Panc1 (cell line): ENCODE measurements at regions of chr11 and their contacts with region 1.

Region 1: DNA sequence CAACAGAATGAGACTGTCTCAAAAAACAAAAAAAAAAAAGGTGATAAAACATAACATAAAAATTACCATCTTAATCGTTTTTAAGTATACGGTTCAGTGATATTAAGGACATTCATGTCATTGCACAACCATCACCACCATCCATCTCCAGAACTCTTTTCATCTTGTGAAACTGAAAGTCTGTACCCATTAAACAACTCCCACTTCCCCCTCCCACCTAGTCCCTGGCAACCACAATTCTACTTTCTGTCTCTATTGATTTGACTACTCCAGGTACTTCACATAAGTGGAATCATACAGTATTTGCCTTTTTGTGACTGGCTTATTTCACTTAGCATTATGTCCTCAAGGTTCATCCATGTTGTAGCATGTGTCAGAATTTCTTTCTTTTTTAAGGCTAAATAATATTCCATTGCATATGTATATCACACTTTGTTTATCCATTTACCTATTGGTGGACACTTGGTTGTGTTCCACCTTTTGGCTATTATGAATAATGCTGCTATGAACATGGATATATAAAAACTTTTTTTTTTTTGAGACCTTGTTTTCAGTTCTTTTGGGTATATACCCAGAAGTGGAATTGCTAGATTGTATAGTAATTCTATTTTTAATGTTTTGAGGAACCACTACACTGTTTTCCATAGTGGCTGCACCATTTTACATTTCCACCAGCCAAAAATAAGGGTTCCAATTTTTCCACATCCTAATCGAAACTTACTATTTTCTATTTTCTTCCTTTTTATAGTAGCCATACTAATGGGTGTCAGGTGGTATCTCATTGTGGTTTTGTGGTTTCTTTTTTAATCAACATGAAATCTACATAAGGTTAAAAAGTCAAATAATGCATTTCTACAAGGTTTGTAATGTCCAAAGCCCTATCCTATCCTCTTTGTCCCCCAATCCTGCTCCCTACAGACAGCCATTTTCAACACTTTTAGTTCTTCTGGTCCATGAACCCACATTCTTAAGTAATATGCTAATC is 23.4 kb upstream of the PIK3C2A start:
- DNase-seq: no peak
- ATAC-seq: no peak
- H3K4me3 ChIP-seq: no peak overlapping the region
- H3K27ac ChIP-seq: no peak overlapping the region
- H3K4me1 ChIP-seq: no peaks in the 10 kb centered on the region
- H3K27me3 ChIP-seq: no peaks in the 10 kb centered on the region
- CTCF ChIP-seq: no peak

Region 2: GRCh38 chr11:17183836-17184235 is 47.3 kb before region 1 on chr11:
- CTCF ChIA-PET with region 1: no interaction called
- POLR2A ChIA-PET with region 1: no interaction called
- in situ Hi-C with region 1: no loop called
- intact Hi-C with region 1: no loop called
- DNase-seq: no peak
- ATAC-seq: no peak
- H3K4me3 ChIP-seq: no peak overlapping the region
- H3K27ac ChIP-seq: no peak overlapping the region
- H3K4me1 ChIP-seq: no peaks in the 10 kb centered on the region
- H3K27me3 ChIP-seq: no peaks in the 10 kb centered on the region
- CTCF ChIP-seq: no peak

Region 3: DNA sequence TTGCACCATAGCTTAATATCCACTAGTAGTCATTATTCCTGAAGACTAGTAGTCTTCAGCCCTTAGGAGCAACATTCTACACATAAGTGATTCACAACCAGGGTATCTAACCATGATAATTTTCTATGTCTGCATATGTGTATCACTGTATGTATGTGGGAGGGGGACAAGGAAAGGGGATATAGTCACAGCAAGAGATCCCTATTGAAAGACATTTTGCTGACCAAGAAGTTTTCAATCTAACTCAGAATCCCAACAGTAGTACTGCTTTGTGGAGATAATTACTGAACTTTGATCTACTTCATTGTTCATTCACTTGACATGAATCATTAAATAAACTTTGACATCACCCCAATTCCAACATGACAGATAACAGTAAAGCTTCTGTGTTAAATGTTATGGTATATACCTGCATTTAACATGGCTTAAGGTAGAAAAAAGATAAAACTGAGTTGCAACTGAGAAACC is 33.7 kb before region 1 on chr11:
- CTCF ChIA-PET with region 1: no interaction called
- POLR2A ChIA-PET with region 1: no interaction called
- in situ Hi-C with region 1: no loop called
- intact Hi-C with region 1: no loop called
- DNase-seq: no peak
- ATAC-seq: peak; percentile 48
- H3K4me3 ChIP-seq: no peak overlapping the region
- H3K27ac ChIP-seq: no peak overlapping the region
- H3K4me1 ChIP-seq: no peaks in the 10 kb centered on the region
- H3K27me3 ChIP-seq: no peaks in the 10 kb centered on the region
- CTCF ChIP-seq: no peak

Region 4: DNA sequence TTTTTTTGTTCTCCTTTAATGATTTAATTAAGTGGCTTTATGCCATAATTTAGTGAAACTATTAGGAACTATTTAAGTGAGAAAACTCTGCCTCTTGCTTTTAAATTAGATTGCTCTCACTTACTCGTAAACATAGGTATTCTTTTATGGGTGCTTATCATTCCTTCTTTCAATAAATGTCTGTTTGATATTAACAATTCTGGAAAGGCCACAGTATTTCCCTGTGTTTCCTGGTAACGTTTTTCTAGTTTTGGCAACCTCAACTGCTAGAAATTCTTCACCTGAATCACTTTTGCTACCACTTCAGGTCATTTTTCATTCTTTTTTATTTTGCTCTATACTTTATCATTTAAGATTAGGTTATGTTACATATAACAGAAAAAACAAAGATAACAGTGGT is 100.5 kb after region 1 on chr11:
- CTCF ChIA-PET with region 1: interaction called, 16 read pairs
- POLR2A ChIA-PET with region 1: no interaction called
- in situ Hi-C with region 1: no loop called
- intact Hi-C with region 1: no loop called
- DNase-seq: no peak
- ATAC-seq: no peak
- H3K4me3 ChIP-seq: no peak overlapping the region
- H3K27ac ChIP-seq: no peak overlapping the region
- H3K4me1 ChIP-seq: no peaks in the 10 kb centered on the region
- H3K27me3 ChIP-seq: no peaks in the 10 kb centered on the region
- CTCF ChIP-seq: no peak

Region 5: GRCh38 chr11:17343907-17344306 is 112.7 kb after region 1 on chr11:
- CTCF ChIA-PET with region 1: no interaction called
- POLR2A ChIA-PET with region 1: no interaction called
- in situ Hi-C with region 1: no loop called
- intact Hi-C with region 1: no loop called
- DNase-seq: no peak
- ATAC-seq: no peak
- H3K4me3 ChIP-seq: no peak overlapping the region
- H3K27ac ChIP-seq: no peak overlapping the region
- H3K4me1 ChIP-seq: no peaks in the 10 kb centered on the region
- H3K27me3 ChIP-seq: no peaks in the 10 kb centered on the region
- CTCF ChIP-seq: no peak

Region 6: DNA sequence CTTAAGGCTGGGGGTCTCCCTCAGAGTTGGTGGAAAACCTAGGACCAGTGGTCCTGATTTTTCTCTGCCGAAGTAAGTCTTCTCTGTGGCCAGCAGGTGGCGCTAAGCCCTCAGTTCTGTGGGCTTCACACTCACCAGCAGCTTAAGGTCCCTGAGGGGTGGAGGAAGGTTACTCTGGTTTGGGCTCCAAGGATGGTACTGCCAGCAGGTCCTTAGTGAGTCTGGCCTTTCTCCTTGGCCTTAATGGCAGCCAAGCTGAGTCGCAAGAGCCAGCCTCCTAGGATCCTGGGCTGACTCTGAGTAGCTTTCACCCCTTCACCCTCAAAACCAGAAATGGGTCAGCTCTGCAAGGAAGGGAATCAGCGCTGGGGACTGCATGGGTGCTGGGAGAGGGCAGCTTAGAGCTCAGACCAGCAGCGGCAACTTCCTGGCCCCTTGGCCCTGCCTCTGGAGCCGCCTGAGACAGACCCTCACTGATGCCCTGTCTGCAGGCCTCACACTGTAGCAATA is 152.9 kb after region 1 on chr11:
- CTCF ChIA-PET with region 1: interaction called, 6 read pairs
- POLR2A ChIA-PET with region 1: no interaction called
- in situ Hi-C with region 1: no loop called
- intact Hi-C with region 1: loop called (anchors 5 kb)
- DNase-seq: peak; percentile 56
- ATAC-seq: peak; percentile 74
- H3K4me3 ChIP-seq: no peak overlapping the region
- H3K27ac ChIP-seq: no peak overlapping the region
- H3K4me1 ChIP-seq: no peaks in the 10 kb centered on the region
- H3K27me3 ChIP-seq: no peaks in the 10 kb centered on the region
- CTCF ChIP-seq: peak; percentile 93

Region 7: GRCh38 chr11:17504330-17505107 is 273.4 kb after region 1 on chr11:
- CTCF ChIA-PET with region 1: no interaction called
- POLR2A ChIA-PET with region 1: no interaction called
- in situ Hi-C with region 1: no loop called
- intact Hi-C with region 1: loop called (anchors 10 kb)
- DNase-seq: no peak
- ATAC-seq: peak; percentile 91
- H3K4me3 ChIP-seq: no peak overlapping the region
- H3K27ac ChIP-seq: no peak overlapping the region
- H3K4me1 ChIP-seq: no peaks in the 10 kb centered on the region
- H3K27me3 ChIP-seq: no peaks in the 10 kb centered on the region; the same call in 1 of the 2 replicates
- CTCF ChIP-seq: peak; percentile 93